Heart right ventricle (tissue), 16 donors: ENCODE measurements at regions of chr14 and their contacts with region 1.

Region 1: GRCh38 chr14:24431569-24432258 is 2.0 kb downstream of the KHNYN start:
- DNase-seq: peak; percentile 91 to 92
- ATAC-seq: peak; percentile 56 to 83 (median 74)
- H3K4me3 ChIP-seq: peak overlapping the region in 9 of 10 donors; percentile 74 to 91 (median 79)
- H3K27ac ChIP-seq: peak overlapping the region in 9 of 10 donors; percentile 91 to 99 (median 97)
- H3K4me1 ChIP-seq: peaks cover 12 to 56% (median 43%) of the 10 kb centered on the region in 9 donors
- H3K27me3 ChIP-seq: no peaks in the 10 kb centered on the region
- CTCF ChIP-seq: peak; percentile 90 to 96 (median 92)

Region 2: GRCh38 chr14:24232121-24232644 is 199.5 kb before region 1 on chr14 and contains the start of gene NEDD8:
- intact Hi-C with region 1: loop called in 2 of 10 experiments (anchors 5 to 10 kb)
- DNase-seq: peak; percentile 90 to 94
- ATAC-seq: peak; percentile 89 to 96 (median 91)
- H3K4me3 ChIP-seq: peak within 1 kb of the TSS; percentile 65 to 97 (median 91)
- H3K27ac ChIP-seq: peak within 1 kb of the TSS; percentile 74 to 97 (median 90)
- H3K4me1 ChIP-seq: peaks cover 18 to 47% (median 34%) of the 10 kb centered on the region in 9 donors
- H3K27me3 ChIP-seq: no peaks in the 10 kb centered on the region
- CTCF ChIP-seq: no peak
- total RNA-seq, gene NEDD8: 178 to 228 (median 199) TPM

Region 3: GRCh38 chr14:24315807-24316603 is 115.7 kb before region 1 on chr14:
- intact Hi-C with region 1: loop called in 1 of 10 experiments (anchors 5 kb)
- DNase-seq: peak; percentile 56 to 67
- ATAC-seq: peak; percentile 53 to 76 (median 66)
- H3K4me3 ChIP-seq: peak overlapping the region in 5 of 10 donors; percentile 6 to 36 (median 20)
- H3K27ac ChIP-seq: peak overlapping the region in 9 of 10 donors; percentile 50 to 88 (median 72)
- H3K4me1 ChIP-seq: peaks cover 11 to 82% (median 61%) of the 10 kb centered on the region in 9 donors
- H3K27me3 ChIP-seq: peaks cover 0 to 38% (median 4%) of the 10 kb centered on the region in 7 donors
- CTCF ChIP-seq: peak in 7 of 9 donors; percentile 27 to 63 (median 42)

Region 4: GRCh38 chr14:24366721-24367513 is 64.8 kb before region 1 on chr14:
- intact Hi-C with region 1: loop called in 9 of 10 experiments (anchors 1 to 10 kb)
- DNase-seq: peak; percentile 92 to 95
- ATAC-seq: peak; percentile 77 to 93 (median 88)
- H3K4me3 ChIP-seq: peak overlapping the region; percentile 29 to 64 (median 56)
- H3K27ac ChIP-seq: peak overlapping the region; percentile 82 to 96 (median 91)
- H3K4me1 ChIP-seq: peaks cover 0 to 60% (median 25%) of the 10 kb centered on the region in 9 donors
- H3K27me3 ChIP-seq: peaks cover 0 to 56% (median 9%) of the 10 kb centered on the region in 7 donors
- CTCF ChIP-seq: no peak

Region 5: DNA sequence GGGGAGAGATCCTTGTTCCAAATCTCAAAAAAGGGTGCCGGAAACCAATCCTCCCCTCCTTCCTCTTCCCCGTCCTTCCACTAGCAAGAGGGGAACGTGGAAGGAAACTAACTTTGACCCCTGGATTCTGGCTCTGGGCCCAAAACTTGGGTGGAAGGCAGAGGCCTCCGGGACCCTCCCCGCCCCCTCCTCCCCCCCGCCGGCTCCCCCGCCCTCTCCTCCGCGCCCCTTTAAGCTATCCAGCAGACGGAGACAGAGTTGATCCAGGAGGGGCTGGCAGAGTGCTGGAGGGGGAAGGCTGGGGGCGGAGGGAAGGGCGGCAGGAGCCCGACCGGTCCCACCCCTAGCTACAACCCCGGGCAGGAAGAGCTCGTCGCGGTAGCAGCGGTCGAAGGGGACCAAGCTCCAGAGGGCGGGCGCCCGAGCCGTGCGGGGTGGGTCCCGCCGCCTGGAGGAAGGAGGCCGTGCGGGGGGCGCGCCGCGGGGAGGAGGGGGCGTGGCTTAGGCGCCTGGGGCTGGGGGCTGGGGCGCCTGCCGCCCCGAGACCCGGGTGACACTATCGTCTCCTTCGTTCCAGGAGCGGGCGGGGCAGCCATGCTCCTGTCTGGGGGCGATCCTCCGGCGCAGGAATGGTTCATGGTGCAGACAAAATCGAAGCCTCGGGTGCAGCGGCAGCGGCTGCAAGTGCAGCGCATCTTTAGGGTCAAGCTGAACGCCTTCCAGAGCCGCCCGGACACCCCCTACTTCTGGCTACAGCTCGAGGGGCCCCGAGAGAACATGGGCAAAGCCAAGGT is 32.9 kb before region 1 on chr14 and contains the start of gene NYNRIN:
- intact Hi-C with region 1: loop called in 1 of 10 experiments (anchors 2 kb)
- DNase-seq: peak; percentile 80 to 82
- ATAC-seq: peak; percentile 84 to 93 (median 89)
- H3K4me3 ChIP-seq: peak within 1 kb of the TSS; percentile 49 to 83 (median 74)
- H3K27ac ChIP-seq: peak within 1 kb of the TSS; percentile 67 to 90 (median 86)
- H3K4me1 ChIP-seq: peaks cover 11 to 63% (median 49%) of the 10 kb centered on the region in 9 donors
- H3K27me3 ChIP-seq: no peaks in the 10 kb centered on the region
- CTCF ChIP-seq: peak in 2 of 9 donors; percentile 18 to 24
- total RNA-seq, gene NYNRIN: 3.6 to 9.0 (median 6.4) TPM